Endothelial cell of umbilical vein (primary cell): ENCODE measurements at regions of chr6 and their contacts with region 1.

Region 1: GRCh38 chr6:73532293-73532692 is 11.5 kb upstream of the EEF1A1 start:
- DNase-seq: no peak
- H3K4me3 ChIP-seq: no peak overlapping the region
- H3K27ac ChIP-seq: no peak overlapping the region
- H3K4me1 ChIP-seq: no peaks in the 10 kb centered on the region
- H3K27me3 ChIP-seq: peaks cover 0 to 1% of the 10 kb centered on the region in 2 experiments
- CTCF ChIP-seq: no peak
- POLR2A ChIP-seq: no peak

Region 2: DNA sequence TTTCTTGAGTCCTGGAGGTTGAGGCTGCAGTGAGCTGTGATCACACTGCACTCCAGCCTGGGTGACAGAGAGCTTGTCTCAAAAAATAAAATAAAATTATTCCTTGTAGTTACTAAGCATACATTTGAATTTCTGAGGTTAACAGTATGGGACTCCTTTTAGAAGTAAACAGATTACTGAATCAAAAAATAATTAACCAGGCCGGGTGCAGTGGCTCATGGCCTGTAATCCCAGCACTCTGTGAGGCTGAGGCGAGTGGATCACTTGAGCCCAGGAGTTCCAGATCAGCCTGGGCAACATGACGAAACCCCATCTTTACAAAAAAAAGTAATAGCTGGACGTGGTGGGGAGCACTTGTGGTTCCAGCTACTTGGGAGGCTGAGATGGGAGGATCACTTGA is 10.6 kb after region 1 on chr6:
- CTCF ChIA-PET with region 1: interaction called, 11 read pairs
- POLR2A ChIA-PET with region 1: no interaction called
- dilution Hi-C with region 1: no loop called
- intact Hi-C with region 1: no loop called
- DNase-seq: no peak
- H3K4me3 ChIP-seq: no peak overlapping the region
- H3K27ac ChIP-seq: no peak overlapping the region
- H3K4me1 ChIP-seq: no peaks in the 10 kb centered on the region
- H3K27me3 ChIP-seq: no peaks in the 10 kb centered on the region
- CTCF ChIP-seq: no peak
- POLR2A ChIP-seq: no peak